Activated CD4-positive, alpha-beta T cell treated with anti-CD3 and anti-CD28 coated beads for 36 hours (primary cell): ENCODE measurements at regions of chr7 and their contacts with region 1.

Region 1: GRCh38 chr7:155804897-155805825 is 7.1 kb downstream of the SHH start:
- DNase-seq: peak; percentile 78
- ATAC-seq: peak; percentile 78
- H3K4me3 Mint-ChIP-seq: no peak overlapping the region
- H3K27ac Mint-ChIP-seq: no peak overlapping the region
- H3K4me1 Mint-ChIP-seq: peaks cover 18% of the 10 kb centered on the region
- H3K27me3 Mint-ChIP-seq: peaks cover 52% of the 10 kb centered on the region

Region 2: DNA sequence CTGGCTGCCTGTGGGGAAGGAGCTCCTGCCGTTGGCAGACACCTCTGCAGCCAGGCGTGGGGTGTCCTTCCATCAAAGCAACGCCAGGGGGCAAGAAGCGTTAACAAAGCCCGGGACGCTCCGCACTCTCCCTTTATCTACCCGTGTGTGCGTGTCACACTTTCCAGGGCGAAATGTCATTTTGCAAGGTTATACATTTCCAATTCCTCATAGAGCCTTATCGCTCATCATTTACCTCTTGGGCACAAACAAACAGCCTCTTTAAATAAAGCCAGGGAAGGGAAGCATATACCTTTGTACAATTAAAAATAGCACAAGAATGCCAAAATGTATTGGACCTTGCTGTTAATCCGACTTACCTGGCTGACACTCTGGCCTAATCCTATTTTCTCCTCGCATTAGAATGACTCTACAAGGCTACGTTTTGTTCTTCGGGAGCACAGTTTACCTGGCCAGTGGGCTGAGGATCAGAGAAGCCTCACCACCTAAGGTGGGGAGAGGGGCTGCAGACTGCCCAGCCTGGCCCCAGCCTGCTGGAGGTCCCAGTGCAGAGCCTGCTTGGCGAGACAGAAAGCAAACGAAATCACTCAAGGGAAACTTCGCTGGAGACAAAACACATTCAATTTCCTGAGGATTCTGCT is 424.8 kb before region 1 on chr7:
- CTCF ChIA-PET with region 1: no interaction called
- POLR2A ChIA-PET with region 1: no interaction called
- intact Hi-C with region 1: loop called (anchors 5 to 10 kb)
- DNase-seq: peak; percentile 89
- ATAC-seq: peak; percentile 94
- H3K4me3 Mint-ChIP-seq: no peak overlapping the region
- H3K27ac Mint-ChIP-seq: no peak overlapping the region
- H3K4me1 Mint-ChIP-seq: peaks cover 23% of the 10 kb centered on the region
- H3K27me3 Mint-ChIP-seq: peaks cover 79% of the 10 kb centered on the region

Region 3: DNA sequence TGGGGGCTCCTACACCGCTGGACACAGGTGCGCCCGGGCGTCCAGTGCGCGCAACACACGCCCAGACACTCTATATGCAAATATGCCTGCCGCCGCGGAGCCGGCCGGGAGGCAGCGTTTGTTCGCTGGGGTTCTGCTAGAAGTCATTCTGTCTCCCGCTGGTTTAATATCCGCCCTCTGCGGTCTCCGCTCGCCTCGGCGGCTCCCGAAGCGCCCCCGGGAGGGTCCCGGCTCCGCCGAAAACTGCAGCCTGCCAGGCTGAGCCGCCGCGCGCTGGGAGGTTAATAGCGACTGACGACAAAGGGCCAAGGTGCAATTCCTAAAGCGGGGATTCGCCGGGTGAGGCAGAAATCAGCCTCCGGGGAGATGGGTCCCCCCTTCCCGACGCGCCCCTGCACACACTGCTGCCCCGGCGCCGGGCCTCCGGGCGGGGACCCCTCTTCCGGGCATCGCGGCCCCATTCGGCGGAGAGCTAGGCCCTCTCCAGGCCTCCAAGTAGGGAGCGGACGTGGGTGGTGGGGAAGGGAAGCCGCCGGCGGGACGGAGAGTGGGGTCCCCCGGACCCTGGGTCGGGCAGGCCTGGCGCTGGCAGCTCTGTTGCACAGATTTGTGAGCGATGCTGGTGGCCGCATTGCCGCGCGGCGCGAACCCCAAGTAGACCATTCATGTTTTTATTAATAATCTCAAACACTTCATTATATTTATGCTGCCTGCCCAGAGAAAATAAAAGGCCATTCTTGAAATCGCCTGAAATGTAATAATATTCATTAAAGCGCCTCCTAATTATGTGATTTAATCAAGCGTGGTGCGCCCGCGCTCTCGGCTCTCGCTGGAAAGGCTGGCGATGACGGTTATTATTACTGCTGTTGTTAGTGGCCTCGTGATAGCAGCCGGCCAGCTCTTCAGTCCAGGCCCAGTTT is 338.1 kb before region 1 on chr7:
- CTCF ChIA-PET with region 1: no interaction called
- POLR2A ChIA-PET with region 1: no interaction called
- intact Hi-C with region 1: loop called in 1 of 2 experiments (anchors 5 kb)
- DNase-seq: peak; percentile 81
- ATAC-seq: peak; percentile 70
- H3K4me3 Mint-ChIP-seq: no peak overlapping the region
- H3K27ac Mint-ChIP-seq: no peak overlapping the region
- H3K4me1 Mint-ChIP-seq: peaks cover 11% of the 10 kb centered on the region
- H3K27me3 Mint-ChIP-seq: peaks cover 76% of the 10 kb centered on the region

Region 4: DNA sequence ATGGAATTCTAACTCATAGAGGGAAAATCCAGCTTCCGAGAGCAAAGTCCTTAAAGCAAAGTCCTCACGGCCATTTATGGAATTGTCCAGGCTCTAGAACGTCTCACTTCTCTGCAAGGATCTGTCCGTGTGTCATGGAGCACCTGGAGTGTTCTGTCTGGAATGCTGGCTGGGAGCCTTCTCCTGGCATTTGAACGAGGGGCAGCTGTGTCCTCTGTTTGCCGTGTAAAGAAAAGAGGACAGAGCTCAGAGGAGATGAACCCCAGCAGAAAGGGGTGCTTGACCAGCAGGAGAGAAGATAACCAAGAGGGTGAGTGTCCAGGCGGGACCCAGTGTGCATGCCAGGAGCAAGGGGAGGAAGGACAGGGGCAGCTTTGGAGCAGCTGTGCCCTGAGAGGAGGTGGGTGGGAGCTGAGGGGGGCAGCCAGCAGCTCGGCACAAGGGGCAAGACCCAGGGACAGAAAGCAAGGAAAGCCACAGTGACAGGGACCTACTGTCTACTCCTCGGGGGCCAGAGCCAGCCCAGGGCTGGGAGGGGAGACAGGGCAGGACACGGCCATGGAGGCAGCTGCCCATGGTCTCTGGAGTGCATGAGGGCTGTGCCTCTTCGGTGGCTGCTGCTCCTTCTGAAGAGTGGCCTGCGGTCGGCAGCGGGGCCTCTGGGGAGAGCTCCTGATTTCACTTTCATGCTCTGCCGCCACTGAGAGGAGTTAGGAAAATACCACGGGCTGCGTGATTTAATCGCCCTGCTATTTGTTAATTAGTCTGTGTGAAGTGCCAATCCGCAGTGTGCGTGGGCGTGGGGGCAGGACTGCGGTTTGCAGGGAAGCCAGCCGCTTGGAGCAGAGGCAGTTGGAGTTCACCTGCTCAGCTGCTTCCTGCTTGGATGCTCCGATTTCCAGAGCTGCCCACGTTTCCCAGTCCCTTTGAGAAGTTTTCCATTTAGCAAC is 156.4 kb after region 1 on chr7:
- CTCF ChIA-PET with region 1: no interaction called
- POLR2A ChIA-PET with region 1: no interaction called
- intact Hi-C with region 1: loop called in 1 of 2 experiments (anchors 5 kb)
- DNase-seq: peak; percentile 68
- ATAC-seq: peak; percentile 27
- H3K4me3 Mint-ChIP-seq: no peak overlapping the region
- H3K27ac Mint-ChIP-seq: peak overlapping the region; percentile 14
- H3K4me1 Mint-ChIP-seq: peaks cover 28% of the 10 kb centered on the region
- H3K27me3 Mint-ChIP-seq: peaks cover 18% of the 10 kb centered on the region

Region 5: GRCh38 chr7:156612930-156613329 is 807.8 kb after region 1 on chr7:
- CTCF ChIA-PET with region 1: no interaction called
- POLR2A ChIA-PET with region 1: no interaction called
- intact Hi-C with region 1: loop called in 1 of 2 experiments (anchors 10 kb)
- DNase-seq: peak; percentile 87
- ATAC-seq: peak; percentile 99
- H3K4me3 Mint-ChIP-seq: no peak overlapping the region
- H3K27ac Mint-ChIP-seq: no peak overlapping the region
- H3K4me1 Mint-ChIP-seq: peaks cover 25% of the 10 kb centered on the region
- H3K27me3 Mint-ChIP-seq: peaks cover 47% of the 10 kb centered on the region

Region 6: GRCh38 chr7:157004050-157004838 is 1199.1 kb after region 1 on chr7:
- CTCF ChIA-PET with region 1: no interaction called
- POLR2A ChIA-PET with region 1: no interaction called
- intact Hi-C with region 1: loop called in 1 of 2 experiments (anchors 5 kb)
- DNase-seq: peak; percentile 38
- ATAC-seq: no peak
- H3K4me3 Mint-ChIP-seq: no peak overlapping the region
- H3K27ac Mint-ChIP-seq: no peak overlapping the region
- H3K4me1 Mint-ChIP-seq: peaks cover 19% of the 10 kb centered on the region
- H3K27me3 Mint-ChIP-seq: peaks cover 67% of the 10 kb centered on the region